Naive thymus-derived CD4-positive, alpha-beta T cell (primary cell): ENCODE measurements at regions of chr17 and their contacts with region 1.

Region 1: GRCh38 chr17:42438600-42439567 is 15.8 kb upstream of the CAVIN1 start:
- DNase-seq: peak in 6 of 9 donors; percentile 29 to 56 (median 42)
- ATAC-seq: peak; percentile 36
- H3K4me3 ChIP-seq: no peak overlapping the region
- H3K4me3 Mint-ChIP-seq: no peak overlapping the region
- H3K27ac ChIP-seq: no peak overlapping the region
- H3K27ac Mint-ChIP-seq: no peak overlapping the region
- H3K4me1 ChIP-seq: peaks cover 0 to 8% of the 10 kb centered on the region in 2 donors
- H3K4me1 Mint-ChIP-seq: peaks cover 8 to 17% (median 14%) of the 10 kb centered on the region in 7 donors
- H3K27me3 ChIP-seq: peaks cover 0 to 3% of the 10 kb centered on the region in 2 donors
- H3K27me3 Mint-ChIP-seq: peaks cover 0 to 20% (median 0%) of the 10 kb centered on the region in 5 donors

Region 2: DNA sequence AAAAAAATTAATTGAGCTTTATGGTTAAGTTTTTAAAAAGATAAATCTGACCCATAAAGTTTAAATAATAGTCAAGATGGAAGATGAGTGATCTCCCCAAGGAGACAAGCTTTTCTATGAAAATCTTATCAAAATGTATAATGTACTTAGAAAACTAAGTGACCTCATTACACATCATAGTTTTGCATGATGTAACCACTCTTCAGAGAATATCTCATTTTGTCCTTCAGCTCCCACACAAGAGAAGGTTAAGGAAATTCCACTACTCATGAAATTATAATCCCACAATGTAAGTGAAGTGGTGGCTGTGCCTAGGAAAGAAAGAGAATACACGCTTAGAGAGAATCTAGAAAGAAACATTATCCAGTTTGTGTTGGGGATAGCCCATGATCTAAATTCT is 65.0 kb before region 1 on chr17:
- CTCF ChIA-PET with region 1: no interaction called
- POLR2A ChIA-PET with region 1: no interaction called
- intact Hi-C with region 1: no loop called
- DNase-seq: no peak
- ATAC-seq: no peak
- H3K4me3 ChIP-seq: no peak overlapping the region
- H3K4me3 Mint-ChIP-seq: no peak overlapping the region
- H3K27ac ChIP-seq: no peak overlapping the region
- H3K27ac Mint-ChIP-seq: no peak overlapping the region
- H3K4me1 ChIP-seq: peaks cover 8 to 11% of the 10 kb centered on the region in 2 donors
- H3K4me1 Mint-ChIP-seq: peaks cover 28 to 61% (median 45%) of the 10 kb centered on the region in 7 donors
- H3K27me3 ChIP-seq: no peaks in the 10 kb centered on the region
- H3K27me3 Mint-ChIP-seq: no peaks in the 10 kb centered on the region

Region 3: DNA sequence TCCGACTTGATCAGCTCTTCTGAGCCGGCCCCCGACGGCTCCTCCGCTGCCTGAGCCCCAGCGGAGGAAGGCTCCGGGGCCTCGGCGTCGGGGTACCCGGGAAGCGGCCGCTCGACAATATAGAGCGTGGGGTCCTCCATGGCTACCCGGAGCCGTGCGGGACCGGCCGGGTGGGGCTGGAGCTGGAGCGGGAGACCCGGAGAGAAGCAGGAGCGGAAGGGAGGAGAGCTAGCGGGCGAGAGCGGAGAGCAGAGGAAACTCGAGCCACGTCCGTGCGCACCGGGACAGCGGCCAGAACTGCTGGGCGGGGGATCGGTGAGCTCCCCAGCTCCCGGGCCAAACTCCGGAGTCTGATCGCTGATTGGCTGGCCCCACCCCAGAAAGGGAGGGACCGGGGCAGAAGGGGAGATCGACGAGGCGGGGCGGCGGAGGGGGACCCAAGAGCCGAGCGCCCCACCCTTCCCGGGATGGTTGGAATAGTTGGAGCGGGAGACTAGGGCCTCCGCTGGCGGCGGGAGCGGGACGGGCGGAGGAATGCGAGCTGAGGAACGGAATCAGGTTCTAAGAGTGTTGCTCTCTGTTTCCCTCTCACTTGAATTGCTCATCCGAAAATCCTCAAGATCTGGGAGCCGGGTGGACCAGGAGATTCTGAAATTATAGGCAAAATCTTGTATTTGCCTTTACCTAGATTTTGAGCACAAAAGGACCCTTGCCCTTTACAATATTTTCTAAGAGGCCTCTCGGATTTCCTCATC is 15.7 kb before region 1 on chr17 and contains the start of gene CAVIN1:
- CTCF ChIA-PET with region 1: interaction called, 3 read pairs
- POLR2A ChIA-PET with region 1: no interaction called
- intact Hi-C with region 1: loop called in 1 of 2 experiments (anchors 1 kb)
- DNase-seq: peak in 1 of 9 donors; percentile 49
- ATAC-seq: peak; percentile 38
- H3K4me3 ChIP-seq: peak within 1 kb of the TSS; percentile 65
- H3K4me3 Mint-ChIP-seq: peak within 1 kb of the TSS; percentile 83 to 96 (median 88)
- H3K27ac ChIP-seq: no peak within 1 kb of the TSS
- H3K27ac Mint-ChIP-seq: peak within 1 kb of the TSS in 5 of 9 donors; percentile 28 to 69 (median 46)
- H3K4me1 ChIP-seq: peaks cover 0 to 14% of the 10 kb centered on the region in 2 donors
- H3K4me1 Mint-ChIP-seq: peaks cover 6 to 29% (median 14%) of the 10 kb centered on the region in 7 donors
- H3K27me3 ChIP-seq: peaks cover 6 to 9% of the 10 kb centered on the region in 2 donors
- H3K27me3 Mint-ChIP-seq: peaks cover 0 to 65% (median 14%) of the 10 kb centered on the region in 5 donors
- total RNA-seq, gene CAVIN1: 0.32 to 3.8 (median 1.1) TPM in 3 of 5 experiments, not detected in the others

Region 4: GRCh38 chr17:42459256-42459800 is 20.4 kb after region 1 on chr17:
- CTCF ChIA-PET with region 1: interaction called, 3 read pairs
- POLR2A ChIA-PET with region 1: no interaction called
- intact Hi-C with region 1: loop called in 1 of 2 experiments (anchors 2 kb)
- DNase-seq: peak in 6 of 9 donors; percentile 10 to 27 (median 16)
- ATAC-seq: no peak
- H3K4me3 ChIP-seq: peak overlapping the region; percentile 86
- H3K4me3 Mint-ChIP-seq: peak overlapping the region; percentile 88 to 97 (median 92)
- H3K27ac ChIP-seq: peak overlapping the region; percentile 66
- H3K27ac Mint-ChIP-seq: peak overlapping the region; percentile 68 to 95 (median 92)
- H3K4me1 ChIP-seq: peaks cover 36 to 39% of the 10 kb centered on the region in 2 donors
- H3K4me1 Mint-ChIP-seq: peaks cover 24 to 47% (median 40%) of the 10 kb centered on the region in 7 donors
- H3K27me3 ChIP-seq: no peaks in the 10 kb centered on the region
- H3K27me3 Mint-ChIP-seq: peaks cover 0 to 20% (median 0%) of the 10 kb centered on the region in 5 donors

Region 5: GRCh38 chr17:42484304-42484703 is 45.4 kb after region 1 on chr17:
- CTCF ChIA-PET with region 1: interaction called, 3 read pairs
- POLR2A ChIA-PET with region 1: no interaction called
- intact Hi-C with region 1: loop called in 1 of 2 experiments (anchors 1 kb)
- DNase-seq: peak in 8 of 9 donors; percentile 63 to 75 (median 72)
- ATAC-seq: peak; percentile 95
- H3K4me3 ChIP-seq: no peak overlapping the region
- H3K4me3 Mint-ChIP-seq: peak overlapping the region in 8 of 10 donors; percentile 54 to 80 (median 60)
- H3K27ac ChIP-seq: no peak overlapping the region
- H3K27ac Mint-ChIP-seq: peak overlapping the region; percentile 9 to 70 (median 60)
- H3K4me1 ChIP-seq: peaks cover 17 to 30% of the 10 kb centered on the region in 2 donors
- H3K4me1 Mint-ChIP-seq: peaks cover 17 to 43% (median 33%) of the 10 kb centered on the region in 7 donors
- H3K27me3 ChIP-seq: no peaks in the 10 kb centered on the region
- H3K27me3 Mint-ChIP-seq: peaks cover 0 to 7% (median 0%) of the 10 kb centered on the region in 5 donors